ENCODE measurements at regions of chr14 and their contacts with region 1.

Region 1: DNA sequence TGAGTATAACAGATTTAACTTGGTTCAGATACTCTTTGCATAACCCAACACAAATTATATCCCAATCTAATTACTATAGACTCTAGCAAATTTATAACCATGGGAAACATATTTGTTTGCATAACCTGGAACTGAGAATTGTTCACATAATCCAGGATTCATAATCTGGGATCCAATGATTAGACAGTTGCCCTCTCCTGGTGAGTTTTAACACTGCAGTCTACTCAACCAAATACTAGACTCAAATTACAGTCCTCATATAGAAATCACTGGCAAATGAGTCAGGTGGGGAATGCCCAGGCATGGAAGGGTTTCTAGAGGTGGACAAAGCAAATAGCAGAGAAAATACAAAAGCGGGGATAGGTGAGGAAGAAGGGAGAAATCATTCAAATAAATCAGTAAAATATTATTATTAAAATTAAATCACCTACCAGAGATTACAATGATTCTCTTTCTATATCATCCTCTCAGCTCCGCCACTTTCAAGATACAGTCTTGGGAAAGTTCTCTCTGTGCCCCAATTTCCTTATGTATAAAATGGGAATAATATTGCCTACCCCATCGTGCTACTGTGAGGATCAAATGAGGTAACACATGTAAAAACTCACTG is 9.4 kb downstream of the GCH1 start:
- DNase-seq: no peak
- ATAC-seq: peak; percentile 79
- H3K4me3 Mint-ChIP-seq: no peak overlapping the region
- H3K27ac Mint-ChIP-seq: no peak overlapping the region
- H3K4me1 Mint-ChIP-seq: peaks cover 33% of the 10 kb centered on the region
- H3K27me3 Mint-ChIP-seq: no peaks in the 10 kb centered on the region
- CTCF ChIP-seq: peak; percentile 79

Region 2: DNA sequence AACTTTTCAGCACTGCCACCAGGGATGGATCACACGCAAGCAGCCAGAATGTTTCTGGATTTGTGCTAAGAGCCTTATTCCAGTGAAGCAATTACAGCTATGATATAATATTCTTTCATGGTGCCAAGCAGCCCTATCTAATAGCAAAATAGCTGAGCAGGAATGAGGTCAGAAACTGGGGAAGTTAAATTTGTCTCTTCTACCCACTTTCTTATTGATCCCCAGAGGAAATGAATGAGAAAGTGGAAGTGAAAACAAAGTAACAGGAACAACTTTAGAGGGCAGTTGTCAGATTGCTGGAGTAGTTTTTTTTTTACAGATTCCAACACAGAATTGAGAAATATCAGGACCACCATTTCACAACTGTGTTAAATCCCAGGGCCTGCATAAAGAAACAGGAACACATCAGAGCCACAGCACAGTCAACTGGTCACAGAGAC is 35.4 kb before region 1 on chr14:
- CTCF ChIA-PET with region 1: interaction called, 3 read pairs
- POLR2A ChIA-PET with region 1: interaction called, 4 read pairs
- intact Hi-C with region 1: loop called (anchors 1 kb)
- DNase-seq: no peak
- ATAC-seq: peak; percentile 93
- H3K4me3 Mint-ChIP-seq: peak overlapping the region; percentile 15
- H3K27ac Mint-ChIP-seq: peak overlapping the region; percentile 50
- H3K4me1 Mint-ChIP-seq: peaks cover 50% of the 10 kb centered on the region
- H3K27me3 Mint-ChIP-seq: no peaks in the 10 kb centered on the region
- CTCF ChIP-seq: no peak

Region 3: DNA sequence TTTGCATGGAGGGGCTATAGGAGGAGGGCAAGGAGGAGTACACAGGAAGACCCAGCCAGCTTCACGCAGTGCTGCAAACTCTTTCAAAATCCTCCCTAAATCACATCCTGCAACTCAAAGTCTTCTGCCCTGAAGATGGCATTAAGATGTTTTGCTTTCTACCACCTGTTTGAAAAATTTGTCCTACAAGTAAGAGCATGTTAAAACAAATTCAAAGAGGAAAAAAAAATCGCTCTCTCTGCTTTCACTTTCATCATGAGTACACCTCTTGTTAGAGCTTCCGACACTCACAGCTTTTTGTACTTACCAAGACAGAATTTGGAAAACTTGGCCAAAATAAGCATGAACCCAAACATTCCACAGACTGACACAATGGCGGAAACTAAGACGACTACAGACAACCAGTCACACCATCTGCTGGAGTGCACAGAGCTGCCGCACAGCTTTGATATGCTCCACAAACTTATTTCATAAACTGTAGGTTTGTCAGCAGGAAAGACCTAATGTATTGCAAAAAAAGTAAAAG is 12.0 kb before region 1 on chr14:
- CTCF ChIA-PET with region 1: interaction called, 14 read pairs
- POLR2A ChIA-PET with region 1: interaction called, 6 read pairs
- intact Hi-C with region 1: loop called (anchors 1 kb)
- DNase-seq: no peak
- ATAC-seq: peak; percentile 65
- H3K4me3 Mint-ChIP-seq: peak overlapping the region; percentile 88
- H3K27ac Mint-ChIP-seq: peak overlapping the region; percentile 97
- H3K4me1 Mint-ChIP-seq: peaks cover 24% of the 10 kb centered on the region
- H3K27me3 Mint-ChIP-seq: no peaks in the 10 kb centered on the region
- CTCF ChIP-seq: no peak

Region 4: DNA sequence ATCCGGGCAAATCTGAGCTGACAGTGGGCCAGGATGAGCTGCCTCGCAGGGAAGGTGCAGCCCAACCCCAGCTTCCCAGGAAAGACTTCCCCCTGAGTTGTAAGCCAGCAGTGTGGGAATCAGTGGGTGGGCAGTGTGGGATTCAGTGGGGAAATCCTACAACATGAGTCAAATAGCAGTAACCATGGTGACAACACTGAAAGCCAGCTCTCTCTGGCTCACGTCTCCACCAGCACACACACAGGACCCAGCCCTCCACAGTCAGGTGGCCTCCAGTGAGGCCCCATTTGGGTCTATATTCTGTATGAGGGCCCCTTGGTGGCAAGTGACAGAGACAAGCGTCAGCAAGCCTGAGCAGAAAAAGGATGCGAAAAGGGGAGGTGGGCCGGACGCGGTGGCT is 229.8 kb after region 1 on chr14:
- CTCF ChIA-PET with region 1: no interaction called
- POLR2A ChIA-PET with region 1: no interaction called
- intact Hi-C with region 1: no loop called
- DNase-seq: no peak
- ATAC-seq: no peak
- H3K4me3 Mint-ChIP-seq: no peak overlapping the region
- H3K27ac Mint-ChIP-seq: no peak overlapping the region
- H3K4me1 Mint-ChIP-seq: peaks cover 20% of the 10 kb centered on the region
- H3K27me3 Mint-ChIP-seq: no peaks in the 10 kb centered on the region
- CTCF ChIP-seq: no peak

Region 5: GRCh38 chr14:55454264-55455002 is 561.2 kb after region 1 on chr14:
- CTCF ChIA-PET with region 1: no interaction called
- POLR2A ChIA-PET with region 1: no interaction called
- intact Hi-C with region 1: no loop called
- DNase-seq: no peak
- ATAC-seq: no peak
- H3K4me3 Mint-ChIP-seq: no peak overlapping the region
- H3K27ac Mint-ChIP-seq: no peak overlapping the region
- H3K4me1 Mint-ChIP-seq: no peaks in the 10 kb centered on the region
- H3K27me3 Mint-ChIP-seq: peaks cover 10% of the 10 kb centered on the region
- CTCF ChIP-seq: no peak

Measured in activated B cell treated with CpG ODN at 0.5 μM for 24 hours (primary cell).